AG04450 (cell line): ENCODE measurements at regions of chr12 and their contacts with region 1.

Region 1: GRCh38 chr12:101759396-101760047 is 20.3 kb upstream of the SYCP3 start:
- DNase-seq: no peak
- H3K4me3 ChIP-seq: no peak overlapping the region
- H3K27ac ChIP-seq: no peak overlapping the region
- H3K27me3 ChIP-seq: no peaks in the 10 kb centered on the region
- CTCF ChIP-seq: peak; percentile 83

Region 2: DNA sequence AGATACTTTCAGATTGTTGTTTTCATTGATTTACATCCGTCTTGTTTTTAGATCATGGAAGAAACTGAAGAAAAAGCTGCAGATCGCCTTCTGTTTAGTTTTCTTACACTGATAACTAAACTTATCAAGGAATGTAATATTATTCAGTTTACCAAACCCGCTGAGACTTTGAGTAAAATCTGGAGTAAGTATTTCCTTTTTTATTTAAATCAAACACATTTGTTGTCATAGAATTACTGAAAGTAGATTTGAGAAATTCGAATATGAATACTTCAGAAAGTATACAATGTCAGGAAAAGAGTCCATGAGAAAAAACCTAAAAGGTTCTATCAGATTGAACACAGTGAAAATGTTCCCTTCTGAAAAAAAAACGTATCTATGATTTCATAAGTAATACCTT is 383.9 kb before region 1 on chr12:
- CTCF ChIA-PET with region 1: no interaction called
- POLR2A ChIA-PET with region 1: no interaction called
- DNase-seq: no peak
- H3K4me3 ChIP-seq: no peak overlapping the region
- H3K27ac ChIP-seq: no peak overlapping the region
- H3K27me3 ChIP-seq: no peaks in the 10 kb centered on the region
- CTCF ChIP-seq: no peak

Region 3: DNA sequence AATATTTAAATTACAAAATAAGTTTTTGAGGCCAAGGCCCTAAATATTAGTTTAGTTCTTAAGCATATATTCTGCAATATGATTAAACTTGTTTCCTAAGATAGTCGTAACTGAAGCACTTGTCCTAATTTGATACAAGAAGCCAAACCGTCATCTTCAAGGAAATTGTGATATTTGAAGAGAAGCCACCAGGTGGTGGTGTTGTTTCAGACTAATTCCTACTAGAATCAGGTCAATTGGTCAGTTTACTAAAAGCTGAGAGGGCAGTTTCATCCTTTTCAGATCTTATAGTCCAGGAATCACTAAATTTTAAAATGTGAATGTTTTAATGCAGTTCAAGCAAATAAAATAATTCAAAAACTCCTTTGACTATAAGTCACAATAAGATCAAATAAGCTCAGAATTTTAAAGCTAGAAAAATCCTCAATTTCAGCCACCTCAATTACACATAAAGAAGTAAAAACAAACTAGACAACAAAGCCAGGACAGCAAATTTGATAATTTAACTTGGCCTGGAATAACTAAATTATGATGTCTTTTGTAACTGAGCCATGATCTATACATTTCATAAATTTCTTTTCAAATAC is 344.9 kb before region 1 on chr12:
- CTCF ChIA-PET with region 1: interaction called, 21 read pairs
- POLR2A ChIA-PET with region 1: no interaction called
- DNase-seq: peak; percentile 30
- H3K4me3 ChIP-seq: no peak overlapping the region
- H3K27ac ChIP-seq: no peak overlapping the region
- H3K27me3 ChIP-seq: no peaks in the 10 kb centered on the region
- CTCF ChIP-seq: peak; percentile 63

Region 4: DNA sequence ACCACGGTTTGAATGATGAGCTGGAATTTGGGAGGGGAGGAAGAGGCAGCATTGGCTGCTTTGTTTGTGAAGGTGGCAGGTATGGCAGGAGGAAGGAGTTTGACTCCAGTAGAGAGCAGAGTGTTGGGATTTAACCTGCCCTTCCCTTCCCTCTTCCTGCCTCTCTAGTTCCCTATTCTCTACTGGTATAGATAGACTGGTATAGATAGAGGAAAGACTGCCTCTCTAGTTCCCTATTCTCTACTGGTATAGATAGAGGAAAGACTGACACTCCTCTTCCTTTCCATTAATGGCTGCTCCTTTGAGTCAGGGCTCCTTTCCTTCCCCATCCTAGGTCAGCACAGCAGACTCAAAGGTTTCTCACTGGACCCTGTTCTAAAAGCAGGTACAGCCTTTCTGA is 11.8 kb before region 1 on chr12:
- CTCF ChIA-PET with region 1: interaction called, 17 read pairs
- POLR2A ChIA-PET with region 1: no interaction called
- DNase-seq: no peak
- H3K4me3 ChIP-seq: no peak overlapping the region
- H3K27ac ChIP-seq: no peak overlapping the region
- H3K27me3 ChIP-seq: no peaks in the 10 kb centered on the region
- CTCF ChIP-seq: no peak

Region 5: DNA sequence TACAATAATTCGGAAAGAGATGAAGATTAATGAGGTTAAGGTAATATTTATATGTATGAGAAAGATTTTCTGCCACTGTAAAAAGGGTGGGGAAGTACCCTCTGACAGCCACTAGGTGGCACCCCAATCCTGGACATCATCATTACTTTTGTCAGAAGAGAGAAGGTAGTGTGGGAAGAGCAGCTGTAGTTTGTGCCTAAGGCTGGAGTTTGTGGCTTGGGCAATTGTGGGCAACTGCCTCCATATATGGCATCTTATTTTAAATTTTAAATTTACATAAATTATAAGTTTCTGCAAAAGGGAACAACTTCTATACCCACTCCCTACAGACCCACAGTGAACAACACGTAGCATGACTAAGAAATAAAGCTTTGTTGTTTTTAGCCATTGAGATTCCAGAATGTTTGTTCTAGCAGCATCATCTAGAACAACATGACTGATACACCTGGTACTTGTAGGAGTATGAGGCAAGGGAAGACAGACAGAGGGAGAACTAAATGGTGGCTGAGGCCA is 14.2 kb after region 1 on chr12:
- CTCF ChIA-PET with region 1: interaction called, 20 read pairs
- POLR2A ChIA-PET with region 1: no interaction called
- DNase-seq: peak; percentile 34
- H3K4me3 ChIP-seq: no peak overlapping the region
- H3K27ac ChIP-seq: no peak overlapping the region
- H3K27me3 ChIP-seq: no peaks in the 10 kb centered on the region
- CTCF ChIP-seq: peak; percentile 86

Region 6: DNA sequence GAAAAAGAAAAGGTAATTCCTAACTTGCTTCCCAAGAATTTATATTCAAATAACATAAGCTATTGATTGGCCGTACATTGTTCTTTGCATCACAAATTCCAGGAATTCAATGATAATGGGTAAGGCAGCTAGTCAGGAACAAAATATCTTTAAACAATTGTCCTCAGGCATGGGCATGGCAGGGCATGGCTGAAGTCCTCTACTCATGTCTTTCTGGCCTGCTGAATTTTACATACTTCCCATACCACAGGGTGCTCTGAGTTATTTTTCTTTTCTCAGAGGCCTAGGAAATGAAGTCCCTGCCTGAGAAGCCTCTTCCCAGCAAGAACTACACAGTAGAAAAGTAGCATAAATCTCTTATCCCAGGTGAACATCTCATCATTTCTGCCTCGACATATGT is 102.7 kb after region 1 on chr12:
- CTCF ChIA-PET with region 1: no interaction called
- POLR2A ChIA-PET with region 1: no interaction called
- DNase-seq: no peak
- H3K4me3 ChIP-seq: no peak overlapping the region
- H3K27ac ChIP-seq: no peak overlapping the region
- H3K27me3 ChIP-seq: no peaks in the 10 kb centered on the region
- CTCF ChIP-seq: no peak